ENCODE measurements at regions of chr2 and their contacts with region 1.

Region 1: GRCh38 chr2:174383796-174384195 is 11.7 kb upstream of the SCRN3 start:
- DNase-seq: no peak
- ATAC-seq: peak; percentile 37; the same call in 2 of the 3 replicates
- H3K4me3 ChIP-seq: no peak overlapping the region
- H3K27ac ChIP-seq: peak overlapping the region; percentile 20; the same call in 1 of the 3 replicates
- H3K4me1 ChIP-seq: no peaks in the 10 kb centered on the region; a peak in 1 of 5 replicates
- H3K27me3 ChIP-seq: no peaks in the 10 kb centered on the region
- CTCF ChIP-seq: no peak
- EP300 ChIP-seq: no peak
- POLR2A ChIP-seq: no peak
- RAD21 ChIP-seq: no peak

Region 2: DNA sequence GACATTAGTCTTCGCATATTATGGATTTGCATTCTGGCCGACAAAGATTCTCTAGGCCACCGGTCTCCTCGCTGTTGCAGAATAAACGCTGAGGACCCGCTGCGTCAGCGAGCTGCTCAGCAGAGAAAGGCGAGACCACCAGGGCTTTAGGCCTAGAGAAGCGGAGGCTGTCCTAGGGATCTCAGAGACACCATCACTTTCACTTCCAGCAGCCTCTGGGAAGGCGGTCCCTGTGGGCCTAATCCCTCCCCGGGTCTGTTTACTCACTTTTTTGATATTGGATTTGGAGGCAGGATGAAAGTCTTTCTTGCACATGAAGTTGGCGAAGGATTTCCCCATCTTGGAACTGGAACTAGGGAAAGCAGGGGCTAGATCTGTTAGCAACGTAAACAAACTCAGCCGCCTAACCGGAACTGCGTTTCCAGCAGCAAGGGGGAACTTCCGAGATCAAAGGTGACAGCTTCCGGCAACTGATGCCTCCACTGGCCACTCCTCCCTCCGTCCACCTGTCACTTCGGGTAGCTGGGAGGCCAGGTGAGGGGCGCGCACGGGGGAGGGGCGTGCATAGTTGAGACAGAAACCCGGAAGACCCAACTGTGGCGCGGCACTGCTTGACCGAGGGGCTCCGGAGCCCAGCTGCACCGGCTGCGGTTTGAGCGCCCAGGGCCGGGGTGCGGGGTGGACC is 11.6 kb after region 1 on chr2 and contains the start of gene SCRN3:
- CTCF ChIA-PET with region 1: no interaction called
- POLR2A ChIA-PET with region 1: interaction called, 10 read pairs
- in situ Hi-C with region 1: no loop called
- intact Hi-C with region 1: no loop called
- DNase-seq: peak; percentile 83 to 91 (median 86)
- ATAC-seq: peak; percentile 97
- H3K4me3 ChIP-seq: peak within 1 kb of the TSS; percentile 76
- H3K27ac ChIP-seq: peak within 1 kb of the TSS; percentile 78
- H3K4me1 ChIP-seq: peaks cover 4 to 5% of the 10 kb centered on the region in 2 experiments; a peak in 1 of 5 replicates
- H3K27me3 ChIP-seq: no peaks in the 10 kb centered on the region
- CTCF ChIP-seq: no peak
- EP300 ChIP-seq: peak; percentile 26; the same call in 1 of the 2 replicates
- POLR2A ChIP-seq: peak; percentile 88
- RAD21 ChIP-seq: no peak
- polyA plus RNA-seq, gene SCRN3: 7.7 to 11.0 TPM

Region 3: GRCh38 chr2:174704642-174705041 is 320.8 kb after region 1 on chr2:
- CTCF ChIA-PET with region 1: no interaction called
- POLR2A ChIA-PET with region 1: no interaction called
- in situ Hi-C with region 1: no loop called
- intact Hi-C with region 1: no loop called
- DNase-seq: no peak
- ATAC-seq: no peak
- H3K4me3 ChIP-seq: no peak overlapping the region
- H3K27ac ChIP-seq: no peak overlapping the region
- H3K4me1 ChIP-seq: no peaks in the 10 kb centered on the region
- H3K27me3 ChIP-seq: peaks cover 17 to 19% of the 10 kb centered on the region in 2 experiments; a peak in 3 of 5 replicates
- CTCF ChIP-seq: no peak
- EP300 ChIP-seq: no peak
- POLR2A ChIP-seq: no peak
- RAD21 ChIP-seq: no peak

Measured in K562 (cell line).